ENCODE measurements at regions of chr3 and their contacts with region 1.

Region 1: GRCh38 chr3:129383292-129383860 is 45.1 kb downstream of the EFCAB12 start:
- DNase-seq: no peak
- H3K4me3 ChIP-seq: no peak overlapping the region
- CTCF ChIP-seq: peak; percentile 86

Region 2: DNA sequence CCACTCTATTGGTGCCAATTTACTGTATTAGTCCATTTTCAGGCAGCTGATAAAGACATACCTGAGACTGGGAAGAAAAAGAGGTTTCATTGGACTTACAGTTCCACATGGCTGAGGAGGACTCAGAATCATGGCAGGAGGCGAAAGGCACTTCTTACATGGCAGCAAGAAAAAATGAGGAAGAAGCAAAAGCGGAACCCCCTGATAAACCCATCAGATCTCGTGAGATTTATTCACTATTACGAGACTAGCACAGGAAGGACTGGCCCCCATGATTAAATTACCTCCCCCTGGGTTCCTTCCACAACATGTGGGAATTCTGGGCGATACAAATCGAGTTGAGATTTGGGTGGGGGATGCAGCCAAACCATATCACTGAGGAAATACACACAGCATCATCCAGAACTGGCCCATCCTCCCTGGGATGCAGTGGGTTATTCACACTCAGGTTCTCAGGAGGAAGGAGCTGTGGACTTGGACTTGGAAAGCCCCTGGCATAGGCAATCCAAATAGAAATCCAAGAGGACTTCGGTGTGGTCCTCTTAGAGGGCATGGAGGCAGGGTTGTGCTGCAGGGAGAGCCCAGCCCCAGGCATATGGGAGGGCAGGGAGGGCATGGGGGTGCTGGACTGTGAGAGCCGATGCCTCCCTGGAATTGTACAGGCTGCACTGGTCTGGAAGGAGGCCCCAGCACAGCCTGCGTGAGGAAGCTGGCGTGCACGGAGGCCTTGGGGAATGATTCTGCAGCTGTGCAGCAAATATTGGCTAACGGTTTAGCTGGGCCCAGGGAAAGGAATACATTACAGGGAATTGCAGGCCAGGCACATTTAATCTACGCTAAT is 17.9 kb before region 1 on chr3:
- CTCF ChIA-PET with region 1: interaction called, 10 read pairs
- POLR2A ChIA-PET with region 1: no interaction called
- DNase-seq: no peak
- H3K4me3 ChIP-seq: no peak overlapping the region
- CTCF ChIP-seq: no peak

Region 3: GRCh38 chr3:129371041-129371826 is 12.1 kb before region 1 on chr3:
- CTCF ChIA-PET with region 1: interaction called, 20 read pairs
- POLR2A ChIA-PET with region 1: no interaction called
- DNase-seq: no peak
- H3K4me3 ChIP-seq: no peak overlapping the region
- CTCF ChIP-seq: no peak

Measured in AG04449 (cell line).